K562 (cell line): ENCODE measurements at regions of chr3 and their contacts with region 1.

Region 1: GRCh38 chr3:47513125-47513929 is at the start of gene ELP6:
- DNase-seq: peak; percentile 97 to 99 (median 98)
- ATAC-seq: peak; percentile 97
- H3K4me3 ChIP-seq: peak within 1 kb of the TSS; percentile 58
- H3K27ac ChIP-seq: peak within 1 kb of the TSS; percentile 95
- H3K4me1 ChIP-seq: peaks cover 30 to 37% of the 10 kb centered on the region in 2 experiments
- H3K27me3 ChIP-seq: no peaks in the 10 kb centered on the region
- CTCF ChIP-seq: peak; percentile 83 to 95 (median 92)
- EP300 ChIP-seq: peak; percentile 40
- POLR2A ChIP-seq: peak; percentile 97
- RAD21 ChIP-seq: peak; percentile 83 to 94
- polyA plus RNA-seq, gene ELP6: 86.1 to 136 TPM

Region 2: DNA sequence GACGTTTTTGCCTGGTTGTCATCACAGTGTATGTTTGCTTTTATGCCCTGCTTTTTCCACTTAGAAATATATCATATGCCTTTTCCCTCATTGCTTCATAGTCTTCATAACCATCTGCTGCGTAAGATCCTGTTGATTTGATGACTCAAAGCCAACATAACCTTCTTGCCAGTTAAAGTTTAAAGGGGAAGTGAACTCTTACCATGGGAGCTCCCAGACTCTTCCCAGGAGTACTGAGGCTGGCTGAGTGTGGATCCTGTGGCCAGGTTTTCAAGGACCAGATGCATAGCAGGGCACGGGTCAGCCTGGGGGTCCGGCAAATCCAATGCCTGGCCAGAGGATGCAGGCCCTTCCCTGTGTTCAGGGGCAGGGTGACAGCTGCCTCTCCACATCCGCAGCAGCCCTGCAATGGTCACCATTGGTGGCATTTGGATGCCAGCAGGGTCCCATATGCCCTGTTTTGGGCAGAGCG is 1866.1 kb before region 1 on chr3:
- CTCF ChIA-PET with region 1: no interaction called
- POLR2A ChIA-PET with region 1: no interaction called
- in situ Hi-C with region 1: no loop called
- intact Hi-C with region 1: no loop called
- DNase-seq: no peak
- ATAC-seq: no peak
- H3K4me3 ChIP-seq: no peak overlapping the region
- H3K27ac ChIP-seq: no peak overlapping the region
- H3K4me1 ChIP-seq: peaks cover 3 to 7% of the 10 kb centered on the region in 2 experiments; a peak in 4 of 5 replicates
- H3K27me3 ChIP-seq: no peaks in the 10 kb centered on the region
- CTCF ChIP-seq: no peak
- EP300 ChIP-seq: no peak
- POLR2A ChIP-seq: no peak
- RAD21 ChIP-seq: no peak

Region 3: DNA sequence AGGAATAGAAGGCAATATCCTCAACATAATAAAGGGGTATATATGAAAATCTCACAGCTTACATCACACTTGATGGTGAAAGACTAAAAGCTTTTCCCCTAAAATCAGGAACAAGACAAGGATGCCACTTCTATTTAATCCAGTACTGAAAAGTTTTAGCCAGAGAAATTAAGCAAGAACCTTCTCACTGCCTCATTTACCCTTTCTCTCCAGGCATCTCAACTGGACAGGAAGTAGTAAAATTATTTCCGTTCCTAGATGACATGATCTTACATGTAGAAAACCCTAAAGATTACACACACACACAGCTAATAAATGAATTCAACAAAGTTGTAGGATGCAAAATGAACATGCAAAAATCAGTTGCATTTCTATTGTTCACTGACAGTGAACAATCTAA is 48.7 kb before region 1 on chr3:
- CTCF ChIA-PET with region 1: no interaction called
- POLR2A ChIA-PET with region 1: no interaction called
- in situ Hi-C with region 1: no loop called
- intact Hi-C with region 1: no loop called
- DNase-seq: no peak
- ATAC-seq: no peak
- H3K4me3 ChIP-seq: no peak overlapping the region
- H3K27ac ChIP-seq: no peak overlapping the region
- H3K4me1 ChIP-seq: no peaks in the 10 kb centered on the region; a peak in 1 of 5 replicates
- H3K27me3 ChIP-seq: no peaks in the 10 kb centered on the region
- CTCF ChIP-seq: no peak
- EP300 ChIP-seq: no peak
- POLR2A ChIP-seq: no peak
- RAD21 ChIP-seq: no peak

Region 4: DNA sequence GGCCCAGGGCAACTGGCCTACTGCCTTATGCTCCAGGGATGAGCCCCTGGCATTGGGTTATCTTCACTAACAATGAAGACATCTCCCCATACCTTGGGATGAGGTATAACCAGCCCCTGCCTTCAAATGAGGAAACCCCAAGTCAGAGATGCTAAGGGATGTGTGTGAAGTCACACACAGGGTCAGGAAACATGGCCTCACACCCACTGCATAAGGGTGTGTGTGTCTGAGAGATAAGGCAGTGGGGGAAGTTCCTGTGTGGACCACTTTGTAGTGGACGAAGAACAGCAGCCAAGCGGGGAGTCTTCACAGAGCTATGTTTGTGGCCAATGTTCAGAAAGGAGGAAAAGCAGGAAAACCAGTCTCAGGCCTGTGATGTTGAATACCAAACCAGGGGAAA is 10.3 kb before region 1 on chr3:
- CTCF ChIA-PET with region 1: no interaction called
- POLR2A ChIA-PET with region 1: interaction called, 12 read pairs
- in situ Hi-C with region 1: no loop called
- intact Hi-C with region 1: no loop called
- DNase-seq: peak; percentile 84 to 94 (median 90)
- ATAC-seq: peak; percentile 95
- H3K4me3 ChIP-seq: no peak overlapping the region
- H3K27ac ChIP-seq: peak overlapping the region; percentile 27
- H3K4me1 ChIP-seq: peaks cover 14 to 20% of the 10 kb centered on the region in 2 experiments; a peak in 4 of 5 replicates
- H3K27me3 ChIP-seq: no peaks in the 10 kb centered on the region
- CTCF ChIP-seq: no peak
- EP300 ChIP-seq: peak; percentile 73; the same call in 1 of the 2 replicates
- POLR2A ChIP-seq: no peak
- RAD21 ChIP-seq: no peak; a peak in 1 of 4 replicates

Region 5: DNA sequence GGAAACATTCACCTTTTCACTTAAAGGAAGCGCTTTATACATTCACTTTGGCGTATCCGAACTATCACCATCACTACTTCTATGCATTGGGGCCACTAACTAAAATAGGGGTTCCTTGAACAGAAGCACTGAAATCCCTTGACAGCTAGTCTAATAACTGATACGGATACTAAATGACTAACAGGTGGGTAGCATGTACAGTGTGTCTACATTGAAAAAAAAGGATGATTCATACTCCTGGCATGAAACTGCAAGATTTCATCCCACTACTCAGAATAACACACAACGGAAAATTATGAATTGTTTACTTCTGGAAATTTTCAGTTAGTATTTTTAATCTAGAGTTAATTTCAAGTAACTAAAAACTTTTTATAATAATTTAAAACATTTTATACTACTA is 171.7 kb after region 1 on chr3:
- CTCF ChIA-PET with region 1: no interaction called
- POLR2A ChIA-PET with region 1: no interaction called
- in situ Hi-C with region 1: no loop called
- intact Hi-C with region 1: no loop called
- DNase-seq: no peak
- ATAC-seq: no peak
- H3K4me3 ChIP-seq: no peak overlapping the region
- H3K27ac ChIP-seq: no peak overlapping the region
- H3K4me1 ChIP-seq: no peaks in the 10 kb centered on the region
- H3K27me3 ChIP-seq: no peaks in the 10 kb centered on the region
- CTCF ChIP-seq: no peak
- EP300 ChIP-seq: no peak
- POLR2A ChIP-seq: no peak
- RAD21 ChIP-seq: no peak